Stomach (tissue), 19 donors: ENCODE measurements at regions of chr22 and their contacts with region 1.

Region 1: DNA sequence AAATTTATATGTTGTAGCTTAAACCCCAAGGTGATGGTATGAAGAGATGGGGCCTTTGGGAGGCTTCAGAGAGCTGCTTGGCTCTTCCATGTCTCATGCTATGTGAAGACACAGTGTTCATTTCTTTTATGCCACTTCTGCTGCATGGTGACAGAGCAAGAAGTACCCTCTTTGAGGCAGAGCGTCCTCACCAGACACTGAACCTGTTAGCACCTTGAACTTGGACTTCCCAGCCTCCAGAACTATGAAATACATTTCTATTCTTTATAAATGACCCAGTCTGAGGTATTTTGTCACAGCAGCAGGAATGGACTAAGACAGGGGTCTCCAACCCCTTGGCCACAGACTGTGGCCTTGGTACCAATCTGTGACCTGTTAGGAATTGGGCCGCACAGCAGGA is 146.4 kb upstream of the TIMP3 start:
- DNase-seq: no peak
- H3K4me3 ChIP-seq: no peak overlapping the region
- H3K27ac ChIP-seq: no peak overlapping the region
- H3K4me1 ChIP-seq: no peaks in the 10 kb centered on the region
- H3K27me3 ChIP-seq: no peaks in the 10 kb centered on the region
- CTCF ChIP-seq: no peak
- EP300 ChIP-seq: no peak
- POLR2A ChIP-seq: no peak

Region 2: DNA sequence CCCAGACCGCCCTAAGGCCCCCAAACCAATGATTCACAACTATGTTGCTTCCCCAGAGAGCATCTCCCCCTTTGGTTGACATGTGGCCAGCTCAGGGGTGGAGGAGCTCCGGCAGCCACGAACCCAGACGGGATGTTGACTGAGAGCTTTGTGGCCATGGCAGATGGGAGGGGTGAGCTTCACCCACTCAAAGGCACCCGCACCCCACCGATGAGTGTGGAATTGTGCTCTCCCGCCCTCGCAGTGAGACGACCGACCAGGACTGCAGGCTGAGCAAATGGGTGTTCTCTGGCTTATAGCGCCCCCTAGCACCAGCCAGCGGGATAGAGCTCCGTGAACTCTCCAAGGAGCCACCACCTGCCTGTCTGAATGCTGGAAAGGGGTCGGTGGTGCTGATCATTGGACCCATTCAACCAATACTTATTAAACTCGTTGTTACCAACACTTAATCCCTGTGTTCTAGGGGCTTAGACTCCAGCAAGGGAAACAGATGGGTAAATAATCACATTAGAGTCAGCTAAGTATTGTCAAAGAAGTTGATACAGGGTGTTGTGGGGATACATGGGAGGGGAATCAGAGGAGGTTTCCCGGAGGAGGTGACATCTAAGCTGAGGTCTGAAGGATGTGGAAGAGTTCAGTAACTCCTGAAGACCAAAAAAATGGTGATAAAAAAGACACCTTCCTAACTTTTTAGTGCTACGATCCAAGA is 142.0 kb after region 1 on chr22:
- intact Hi-C with region 1: loop called (anchors 5 kb)
- DNase-seq: peak; percentile 72 to 89
- H3K4me3 ChIP-seq: no peak overlapping the region
- H3K27ac ChIP-seq: peak overlapping the region in 1 of 5 donors; percentile 43
- H3K4me1 ChIP-seq: peaks cover 5 to 27% (median 19%) of the 10 kb centered on the region in 4 donors
- H3K27me3 ChIP-seq: peaks cover 0 to 16% (median 13%) of the 10 kb centered on the region in 3 donors
- CTCF ChIP-seq: peak in 5 of 7 experiments; percentile 73 to 94 (median 87)
- EP300 ChIP-seq: no peak
- POLR2A ChIP-seq: no peak